Ascending aorta (tissue), 2 donors: ENCODE measurements at regions of chr4 and their contacts with region 1.

Region 1: DNA sequence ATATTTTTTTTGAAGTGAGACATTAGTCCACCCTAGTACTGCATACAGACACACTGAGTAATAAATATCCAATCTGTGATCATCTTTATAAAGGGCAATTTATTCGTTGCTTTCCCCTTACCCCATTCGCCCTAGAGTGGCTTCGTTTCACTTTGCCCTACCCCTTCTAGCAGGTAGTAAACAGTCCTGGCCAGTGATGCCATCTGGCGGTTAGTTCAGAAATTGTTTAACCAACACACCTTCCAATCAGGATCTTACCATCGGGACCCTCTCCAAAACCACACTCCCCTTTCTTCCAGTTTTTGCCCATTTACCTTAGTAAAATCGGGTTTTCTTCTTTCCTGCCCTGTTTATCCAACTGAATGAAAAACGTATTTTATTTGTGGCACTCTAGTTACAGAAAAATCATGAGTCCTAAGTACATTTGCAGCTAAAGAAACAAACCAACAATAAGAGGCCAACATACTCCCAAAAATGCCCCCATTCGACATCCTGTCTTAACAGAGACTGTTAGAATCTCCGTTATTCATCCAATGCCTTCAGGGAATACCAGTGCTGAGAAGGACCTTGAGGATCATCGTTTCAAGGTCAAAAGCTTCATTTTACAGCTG is 2.2 kb downstream of the PPA2 start:
- DNase-seq: peak; percentile 13 to 75
- H3K4me3 ChIP-seq: peak overlapping the region; percentile 91 to 97
- H3K27ac ChIP-seq: peak overlapping the region; percentile 98 to 99
- H3K4me1 ChIP-seq: peaks cover 8 to 16% of the 10 kb centered on the region in 2 donors
- H3K27me3 ChIP-seq: no peaks in the 10 kb centered on the region
- CTCF ChIP-seq: peak; percentile 58 to 72 (median 64)

Region 2: GRCh38 chr4:104490770-104491480 is 980.7 kb before region 1 on chr4:
- intact Hi-C with region 1: loop called (anchors 10 kb)
- DNase-seq: peak; percentile 12 to 79
- H3K4me3 ChIP-seq: peak overlapping the region; percentile 58 to 72
- H3K27ac ChIP-seq: peak overlapping the region; percentile 63 to 70
- H3K4me1 ChIP-seq: no peaks in the 10 kb centered on the region
- H3K27me3 ChIP-seq: no peaks in the 10 kb centered on the region
- CTCF ChIP-seq: no peak

Region 3: GRCh38 chr4:105140684-105141490 is 330.8 kb before region 1 on chr4:
- intact Hi-C with region 1: loop called (anchors 1 kb)
- DNase-seq: no peak
- H3K4me3 ChIP-seq: no peak overlapping the region
- H3K27ac ChIP-seq: no peak overlapping the region
- H3K4me1 ChIP-seq: no peaks in the 10 kb centered on the region
- H3K27me3 ChIP-seq: no peaks in the 10 kb centered on the region
- CTCF ChIP-seq: peak; percentile 32 to 80 (median 55)

Region 4: GRCh38 chr4:105191621-105192210 is 280.0 kb before region 1 on chr4:
- intact Hi-C with region 1: loop called (anchors 5 kb)
- DNase-seq: no peak
- H3K4me3 ChIP-seq: peak overlapping the region in 1 of 2 donors; percentile 4
- H3K27ac ChIP-seq: peak overlapping the region; percentile 60 to 68
- H3K4me1 ChIP-seq: peaks cover 2 to 9% of the 10 kb centered on the region in 2 donors
- H3K27me3 ChIP-seq: no peaks in the 10 kb centered on the region
- CTCF ChIP-seq: no peak

Region 5: GRCh38 chr4:105453550-105454205 is 18.0 kb before region 1 on chr4:
- intact Hi-C with region 1: no loop called
- DNase-seq: no peak
- H3K4me3 ChIP-seq: no peak overlapping the region
- H3K27ac ChIP-seq: no peak overlapping the region
- H3K4me1 ChIP-seq: peaks cover 0 to 12% of the 10 kb centered on the region in 2 donors
- H3K27me3 ChIP-seq: no peaks in the 10 kb centered on the region
- CTCF ChIP-seq: no peak

Region 6: DNA sequence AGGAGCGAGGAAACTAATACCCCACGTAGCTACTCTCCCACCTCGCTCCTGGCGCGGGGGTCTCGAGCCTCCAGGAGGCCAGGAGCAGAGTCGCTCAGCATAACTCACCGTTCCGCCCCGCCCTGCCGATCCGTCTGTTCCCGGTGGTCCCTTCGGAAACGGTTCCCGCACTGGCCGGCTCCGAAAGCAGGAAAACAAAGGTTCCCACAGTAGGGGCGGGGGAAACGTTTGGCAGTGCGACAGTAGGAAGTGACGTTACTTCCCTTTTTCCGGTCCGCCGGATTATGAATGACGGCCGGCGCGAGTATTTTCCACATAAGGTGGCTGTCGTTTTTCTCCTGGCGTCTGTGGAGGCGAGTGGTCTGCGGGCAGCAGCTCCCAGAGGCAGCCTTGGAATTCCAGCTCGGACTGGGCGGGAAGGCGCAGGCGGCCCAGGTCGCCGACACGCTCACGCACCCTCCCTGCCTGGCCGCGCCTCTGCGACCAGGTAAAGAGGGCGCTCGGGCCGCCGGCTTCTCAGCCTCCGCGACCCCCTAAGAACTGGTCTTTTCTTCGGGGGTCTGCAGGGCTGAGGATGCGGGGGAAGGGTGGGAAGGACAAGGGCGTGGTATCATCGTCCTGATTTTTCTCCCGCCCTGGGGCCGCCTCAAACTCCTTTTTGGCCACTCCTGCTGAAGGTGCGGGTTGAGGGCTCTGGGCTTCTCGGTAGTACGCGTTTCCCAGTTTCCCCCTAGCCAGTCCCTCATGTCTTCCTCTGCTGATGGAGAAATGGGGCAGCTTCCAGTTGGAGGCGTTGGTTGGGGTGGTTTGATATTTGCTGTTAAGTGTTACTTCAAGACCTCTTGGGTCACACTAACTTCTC is 237.1 kb after region 1 on chr4 and contains the starts of genes GSTCD and INTS12:
- intact Hi-C with region 1: loop called (anchors 5 kb)
- DNase-seq: peak; percentile 61 to 95
- H3K4me3 ChIP-seq: peak within 1 kb of the TSS; percentile 76 to 87
- H3K27ac ChIP-seq: peak within 1 kb of the TSS; percentile 84 to 90
- H3K4me1 ChIP-seq: peaks cover 7 to 18% of the 10 kb centered on the region in 2 donors
- H3K27me3 ChIP-seq: no peaks in the 10 kb centered on the region
- CTCF ChIP-seq: no peak
- total RNA-seq, gene GSTCD: 4.4 TPM
- total RNA-seq, gene INTS12: 11.5 TPM